Activated B cell treated with CpG ODN at 0.5 μM for 24 hours (primary cell): ENCODE measurements at regions of chr2 and their contacts with region 1.

Region 1: GRCh38 chr2:213157242-213157641 is 5.8 kb upstream of the IKZF2 start:
- DNase-seq: no peak
- ATAC-seq: peak; percentile 88
- H3K4me3 Mint-ChIP-seq: peak overlapping the region; percentile 49
- H3K27ac Mint-ChIP-seq: peak overlapping the region; percentile 80
- H3K4me1 Mint-ChIP-seq: peaks cover 58% of the 10 kb centered on the region
- H3K27me3 Mint-ChIP-seq: no peaks in the 10 kb centered on the region
- CTCF ChIP-seq: no peak

Region 2: DNA sequence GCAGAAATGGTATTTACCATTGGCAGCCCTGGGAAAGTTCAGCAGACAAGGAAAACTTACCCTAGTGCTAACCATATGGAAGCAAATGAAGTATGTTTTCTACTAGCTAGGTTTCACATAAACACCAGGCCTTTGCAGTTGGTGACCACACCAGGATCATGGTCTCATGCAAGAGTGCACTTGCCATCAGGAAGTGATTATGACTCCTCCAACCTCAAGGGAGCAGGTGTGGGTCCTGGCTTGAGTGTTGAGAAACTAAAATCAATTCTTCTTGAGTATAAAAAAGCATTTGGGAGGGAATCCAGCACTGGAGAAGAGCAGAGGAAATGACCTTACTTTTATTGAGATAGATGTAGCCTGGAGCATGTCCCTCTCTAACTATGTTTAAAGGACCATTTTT is 70.2 kb after region 1 on chr2:
- CTCF ChIA-PET with region 1: interaction called, 13 read pairs
- POLR2A ChIA-PET with region 1: interaction called, 52 read pairs
- intact Hi-C with region 1: no loop called
- DNase-seq: no peak
- ATAC-seq: peak; percentile 84
- H3K4me3 Mint-ChIP-seq: peak overlapping the region; percentile 65
- H3K27ac Mint-ChIP-seq: peak overlapping the region; percentile 90
- H3K4me1 Mint-ChIP-seq: peaks cover 60% of the 10 kb centered on the region
- H3K27me3 Mint-ChIP-seq: no peaks in the 10 kb centered on the region
- CTCF ChIP-seq: no peak

Region 3: GRCh38 chr2:213475433-213475832 is 318.2 kb after region 1 on chr2:
- CTCF ChIA-PET with region 1: no interaction called
- POLR2A ChIA-PET with region 1: no interaction called
- intact Hi-C with region 1: no loop called
- DNase-seq: no peak
- ATAC-seq: no peak
- H3K4me3 Mint-ChIP-seq: no peak overlapping the region
- H3K27ac Mint-ChIP-seq: no peak overlapping the region
- H3K4me1 Mint-ChIP-seq: no peaks in the 10 kb centered on the region
- H3K27me3 Mint-ChIP-seq: no peaks in the 10 kb centered on the region
- CTCF ChIP-seq: no peak

Region 4: DNA sequence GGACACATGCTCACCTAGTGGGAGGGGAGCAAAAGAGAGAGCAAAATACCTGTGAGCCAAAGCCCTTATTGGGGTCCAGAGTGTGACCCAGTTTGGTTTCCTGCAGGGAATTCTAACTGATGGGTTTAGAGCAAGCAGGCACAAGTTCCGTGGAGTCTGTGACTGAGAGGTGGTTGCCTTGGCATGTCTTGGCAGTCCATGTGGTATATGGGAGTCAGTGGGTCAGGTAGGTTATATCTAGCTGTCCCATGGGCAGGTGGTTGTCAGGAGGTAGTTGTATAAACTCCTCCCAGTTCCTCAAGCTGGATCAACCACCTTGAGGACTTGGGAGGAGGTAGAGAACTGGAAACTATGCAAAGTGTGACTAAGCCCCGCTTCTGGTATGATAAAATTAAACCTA is 800.8 kb after region 1 on chr2:
- CTCF ChIA-PET with region 1: no interaction called
- POLR2A ChIA-PET with region 1: no interaction called
- intact Hi-C with region 1: no loop called
- DNase-seq: no peak
- ATAC-seq: no peak
- H3K4me3 Mint-ChIP-seq: no peak overlapping the region
- H3K27ac Mint-ChIP-seq: no peak overlapping the region
- H3K4me1 Mint-ChIP-seq: no peaks in the 10 kb centered on the region
- H3K27me3 Mint-ChIP-seq: peaks cover 2% of the 10 kb centered on the region
- CTCF ChIP-seq: no peak